ENCODE measurements at regions of chr15 and their contacts with region 1.

Region 1: GRCh38 chr15:55407949-55408791 is at the starts of genes CCPG1 and PIERCE2:
- DNase-seq: peak; percentile 95
- ATAC-seq: peak; percentile 93
- H3K4me3 Mint-ChIP-seq: peak within 1 kb of the TSS; percentile 87
- H3K27ac Mint-ChIP-seq: peak within 1 kb of the TSS; percentile 90
- H3K4me1 Mint-ChIP-seq: peaks cover 24% of the 10 kb centered on the region
- H3K27me3 Mint-ChIP-seq: no peaks in the 10 kb centered on the region
- total RNA-seq, gene CCPG1: 11.3 to 12.2 TPM
- total RNA-seq, gene PIERCE2: 0.34 to 0.81 TPM

Region 2: DNA sequence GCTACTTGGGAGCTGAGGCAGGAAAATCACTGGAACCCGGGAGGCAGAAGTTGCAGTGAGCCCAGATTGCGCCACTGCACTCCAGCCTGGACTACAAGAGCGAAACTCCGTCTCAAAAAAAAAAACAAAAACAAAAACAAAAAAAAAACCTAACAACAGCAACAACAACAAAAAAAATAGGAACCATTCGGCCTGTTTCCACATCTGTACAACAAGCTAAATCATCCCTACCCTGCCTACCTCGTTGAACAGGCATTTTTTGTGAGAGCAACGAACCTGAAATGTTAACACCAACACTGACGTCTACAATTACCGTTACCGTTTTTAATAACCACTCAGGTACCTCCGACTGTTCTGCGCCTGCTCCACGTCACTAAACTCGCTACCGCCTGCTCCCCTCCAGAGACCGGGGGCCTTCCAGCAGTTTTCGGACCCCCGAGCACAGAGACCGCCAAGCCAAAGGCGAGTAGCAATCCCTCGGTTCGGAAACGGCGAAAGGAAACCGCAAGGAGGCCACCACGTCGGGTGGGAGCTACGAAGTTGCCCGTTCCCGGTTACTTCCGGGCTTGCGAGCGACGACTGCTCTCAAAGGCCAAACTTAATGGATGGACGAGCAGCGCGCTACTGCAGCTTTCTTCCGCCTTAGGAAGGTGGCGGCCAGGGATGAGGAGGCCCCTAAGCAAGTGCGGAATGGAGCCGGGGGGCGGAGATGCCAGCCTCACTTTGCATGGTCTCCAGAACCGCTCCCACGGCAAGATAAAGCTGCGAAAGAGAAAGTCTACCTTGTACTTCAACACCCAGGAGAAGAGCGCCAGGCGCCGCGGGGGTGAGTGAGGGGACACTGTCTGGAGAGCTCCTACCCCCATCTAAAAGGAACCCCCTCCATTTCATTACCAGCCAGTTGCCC is 89.3 kb before region 1 on chr15 and contains the starts of genes PIGB and PIGBOS1:
- CTCF ChIA-PET with region 1: interaction called, 12 read pairs
- POLR2A ChIA-PET with region 1: interaction called, 3 read pairs
- intact Hi-C with region 1: loop called (anchors 1 kb)
- DNase-seq: peak; percentile 88
- ATAC-seq: peak; percentile 89
- H3K4me3 Mint-ChIP-seq: peak within 1 kb of the TSS; percentile 97
- H3K27ac Mint-ChIP-seq: peak within 1 kb of the TSS; percentile 99
- H3K4me1 Mint-ChIP-seq: peaks cover 51% of the 10 kb centered on the region
- H3K27me3 Mint-ChIP-seq: no peaks in the 10 kb centered on the region
- total RNA-seq, gene PIGB: 19.8 to 21.1 TPM
- total RNA-seq, gene PIGBOS1: 8.8 to 11.0 TPM

Region 3: GRCh38 chr15:55494931-55495330 is 86.8 kb after region 1 on chr15:
- CTCF ChIA-PET with region 1: no interaction called
- POLR2A ChIA-PET with region 1: no interaction called
- intact Hi-C with region 1: loop called in 1 of 2 experiments (anchors 1 kb)
- DNase-seq: no peak
- ATAC-seq: no peak
- H3K4me3 Mint-ChIP-seq: no peak overlapping the region
- H3K27ac Mint-ChIP-seq: no peak overlapping the region
- H3K4me1 Mint-ChIP-seq: peaks cover 7% of the 10 kb centered on the region
- H3K27me3 Mint-ChIP-seq: no peaks in the 10 kb centered on the region

Region 4: DNA sequence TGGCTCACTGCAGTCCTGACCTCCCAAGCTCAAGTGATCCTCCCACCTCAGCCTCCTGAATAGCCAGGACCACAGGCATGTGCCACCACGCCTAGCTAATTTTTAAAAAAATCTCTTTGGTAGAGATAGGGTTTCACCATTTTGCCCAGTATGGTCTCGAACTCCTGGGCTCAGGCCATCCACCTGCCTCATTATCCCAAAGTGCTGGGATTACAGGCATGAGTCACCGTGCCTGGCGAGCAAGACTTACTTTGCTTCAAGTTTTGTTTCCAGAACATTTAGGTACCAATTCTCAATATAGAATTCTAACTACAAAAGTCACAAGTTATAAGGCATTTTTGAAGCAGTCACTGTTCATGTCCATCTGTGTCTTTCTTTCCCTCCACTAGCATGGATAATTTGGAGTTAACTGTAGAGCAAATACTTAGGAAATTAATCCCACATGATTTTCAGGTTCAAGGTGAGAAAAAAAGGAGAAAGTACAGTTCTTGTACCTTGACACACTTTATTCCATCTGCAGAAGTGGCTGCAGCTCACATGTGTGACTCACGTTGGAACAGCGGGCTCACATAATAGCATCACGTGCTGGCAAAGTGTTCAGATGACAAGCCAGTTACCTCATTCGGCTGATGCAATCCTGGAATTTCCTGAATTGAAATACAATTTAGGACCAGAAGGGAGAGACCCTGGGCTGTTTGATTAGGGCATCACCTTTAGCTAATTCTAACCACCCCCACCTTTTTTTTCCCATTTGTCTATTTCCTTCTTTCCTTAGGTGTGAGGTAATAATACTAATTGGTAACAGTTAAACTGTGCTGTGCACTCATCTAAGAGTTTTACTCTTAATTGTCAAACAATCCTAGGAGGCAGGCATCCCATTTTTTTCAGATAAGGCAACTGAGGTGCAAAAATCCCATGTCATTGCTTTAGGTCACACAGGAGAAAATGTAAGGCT is 632.2 kb after region 1 on chr15:
- CTCF ChIA-PET with region 1: no interaction called
- POLR2A ChIA-PET with region 1: no interaction called
- intact Hi-C with region 1: loop called in 1 of 2 experiments (anchors 5 kb)
- DNase-seq: peak; percentile 63
- ATAC-seq: peak; percentile 31
- H3K4me3 Mint-ChIP-seq: no peak overlapping the region
- H3K27ac Mint-ChIP-seq: peak overlapping the region; percentile 87
- H3K4me1 Mint-ChIP-seq: peaks cover 61% of the 10 kb centered on the region
- H3K27me3 Mint-ChIP-seq: no peaks in the 10 kb centered on the region

Measured in activated CD4-positive, alpha-beta T cell treated with anti-CD3 and anti-CD28 coated beads for 36 hours (primary cell).